MCF 10A (cell line): ENCODE measurements at regions of chr3 and their contacts with region 1.

Region 1: GRCh38 chr3:46488735-46489361 is 8.9 kb upstream of the RTP3 start:
- DNase-seq: peak; percentile 91
- H3K4me3 Mint-ChIP-seq: no peak overlapping the region
- H3K27ac Mint-ChIP-seq: no peak overlapping the region
- H3K4me1 Mint-ChIP-seq: peaks cover 19% of the 10 kb centered on the region
- H3K27me3 Mint-ChIP-seq: no peaks in the 10 kb centered on the region
- CTCF ChIP-seq: peak; percentile 99

Region 2: GRCh38 chr3:45199837-45200648 is 1288.8 kb before region 1 on chr3:
- CTCF ChIA-PET with region 1: no interaction called
- POLR2A ChIA-PET with region 1: no interaction called
- intact Hi-C with region 1: no loop called
- DNase-seq: peak; percentile 94
- H3K4me3 Mint-ChIP-seq: no peak overlapping the region
- H3K27ac Mint-ChIP-seq: peak overlapping the region; percentile 63
- H3K4me1 Mint-ChIP-seq: peaks cover 22% of the 10 kb centered on the region
- H3K27me3 Mint-ChIP-seq: no peaks in the 10 kb centered on the region
- CTCF ChIP-seq: no peak

Region 3: GRCh38 chr3:46013316-46014094 is 475.3 kb before region 1 on chr3:
- CTCF ChIA-PET with region 1: no interaction called
- POLR2A ChIA-PET with region 1: no interaction called
- intact Hi-C with region 1: no loop called
- DNase-seq: no peak
- H3K4me3 Mint-ChIP-seq: no peak overlapping the region
- H3K27ac Mint-ChIP-seq: no peak overlapping the region
- H3K4me1 Mint-ChIP-seq: no peaks in the 10 kb centered on the region
- H3K27me3 Mint-ChIP-seq: no peaks in the 10 kb centered on the region
- CTCF ChIP-seq: no peak

Region 4: DNA sequence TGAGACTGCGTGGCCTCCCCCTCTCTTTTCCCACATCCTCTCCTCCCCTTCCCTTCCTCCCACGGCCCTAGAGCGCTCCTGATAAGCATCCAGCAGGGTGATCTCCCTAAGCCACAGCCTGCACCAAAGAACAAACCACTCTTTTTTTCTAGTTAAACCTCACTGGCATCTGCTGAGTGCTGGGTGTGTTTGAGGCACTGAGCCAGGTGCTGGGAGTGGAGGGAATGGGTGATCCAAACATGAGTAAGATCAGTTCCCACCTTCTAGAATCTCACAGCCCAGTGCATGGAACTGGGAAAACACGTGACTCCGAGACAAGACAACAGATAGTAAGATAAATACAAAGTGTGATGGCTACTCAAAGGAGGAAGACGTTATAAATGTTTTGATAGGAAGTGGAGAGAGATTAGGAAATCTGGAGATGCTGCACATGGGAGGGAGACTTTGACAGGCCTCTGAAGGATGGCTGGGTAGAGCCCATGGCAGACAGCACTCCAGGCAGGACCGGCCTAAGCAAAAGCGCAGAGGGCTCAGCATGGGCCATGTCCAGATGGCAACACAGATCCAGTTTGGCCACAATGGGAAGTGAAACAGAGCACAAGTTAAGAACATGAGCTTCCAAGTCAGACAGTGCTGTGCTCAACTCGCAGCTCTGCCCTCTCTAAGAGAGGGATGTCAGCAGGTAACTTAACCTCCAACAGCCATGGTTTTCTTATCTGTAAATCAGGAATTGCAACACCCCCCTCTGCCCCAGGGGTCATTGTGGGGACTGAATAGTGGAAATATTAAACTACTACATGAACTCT is 191.0 kb before region 1 on chr3:
- CTCF ChIA-PET with region 1: no interaction called
- POLR2A ChIA-PET with region 1: no interaction called
- intact Hi-C with region 1: no loop called
- DNase-seq: peak; percentile 66
- H3K4me3 Mint-ChIP-seq: no peak overlapping the region
- H3K27ac Mint-ChIP-seq: no peak overlapping the region
- H3K4me1 Mint-ChIP-seq: peaks cover 18% of the 10 kb centered on the region
- H3K27me3 Mint-ChIP-seq: no peaks in the 10 kb centered on the region
- CTCF ChIP-seq: no peak

Region 5: DNA sequence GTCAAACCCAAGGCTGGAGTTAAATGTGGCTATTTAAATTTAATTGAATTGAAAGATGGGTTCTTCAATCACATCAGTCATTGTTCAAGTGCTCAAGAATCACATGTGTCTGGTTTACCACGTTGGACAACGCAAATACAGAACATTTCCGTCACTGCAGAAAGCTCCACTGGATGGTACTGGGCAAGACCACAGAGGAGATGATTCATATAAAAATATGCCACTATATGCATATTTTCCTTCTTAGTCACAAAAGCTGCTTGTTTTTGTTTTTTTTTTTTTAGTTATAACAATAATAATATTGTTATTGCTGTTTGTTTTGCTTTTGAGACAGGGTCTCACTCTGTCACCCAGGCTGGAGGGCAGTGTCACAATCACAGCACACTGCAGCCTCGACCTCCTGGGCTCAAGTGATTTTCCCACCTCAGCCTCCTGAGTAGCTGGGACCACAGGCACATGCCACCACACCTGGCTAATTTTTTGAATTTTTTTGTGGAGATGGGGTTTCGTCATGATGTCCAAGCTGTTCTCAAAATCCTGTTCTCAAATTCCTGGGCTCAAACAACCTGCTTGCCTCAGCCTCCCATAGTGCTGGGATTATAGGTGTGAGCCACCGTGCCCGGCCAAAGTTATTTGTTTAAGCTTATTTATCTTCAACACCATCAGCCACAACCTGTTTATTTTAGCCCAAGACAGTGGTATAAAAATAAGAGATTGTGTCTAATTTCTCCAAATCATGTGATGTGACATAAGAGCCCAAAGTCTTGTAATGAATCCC is 28.4 kb after region 1 on chr3:
- CTCF ChIA-PET with region 1: interaction called, 12 read pairs
- POLR2A ChIA-PET with region 1: no interaction called
- intact Hi-C with region 1: no loop called
- DNase-seq: peak; percentile 80
- H3K4me3 Mint-ChIP-seq: peak overlapping the region; percentile 15
- H3K27ac Mint-ChIP-seq: peak overlapping the region; percentile 95
- H3K4me1 Mint-ChIP-seq: peaks cover 22% of the 10 kb centered on the region
- H3K27me3 Mint-ChIP-seq: no peaks in the 10 kb centered on the region
- CTCF ChIP-seq: no peak

Region 6: DNA sequence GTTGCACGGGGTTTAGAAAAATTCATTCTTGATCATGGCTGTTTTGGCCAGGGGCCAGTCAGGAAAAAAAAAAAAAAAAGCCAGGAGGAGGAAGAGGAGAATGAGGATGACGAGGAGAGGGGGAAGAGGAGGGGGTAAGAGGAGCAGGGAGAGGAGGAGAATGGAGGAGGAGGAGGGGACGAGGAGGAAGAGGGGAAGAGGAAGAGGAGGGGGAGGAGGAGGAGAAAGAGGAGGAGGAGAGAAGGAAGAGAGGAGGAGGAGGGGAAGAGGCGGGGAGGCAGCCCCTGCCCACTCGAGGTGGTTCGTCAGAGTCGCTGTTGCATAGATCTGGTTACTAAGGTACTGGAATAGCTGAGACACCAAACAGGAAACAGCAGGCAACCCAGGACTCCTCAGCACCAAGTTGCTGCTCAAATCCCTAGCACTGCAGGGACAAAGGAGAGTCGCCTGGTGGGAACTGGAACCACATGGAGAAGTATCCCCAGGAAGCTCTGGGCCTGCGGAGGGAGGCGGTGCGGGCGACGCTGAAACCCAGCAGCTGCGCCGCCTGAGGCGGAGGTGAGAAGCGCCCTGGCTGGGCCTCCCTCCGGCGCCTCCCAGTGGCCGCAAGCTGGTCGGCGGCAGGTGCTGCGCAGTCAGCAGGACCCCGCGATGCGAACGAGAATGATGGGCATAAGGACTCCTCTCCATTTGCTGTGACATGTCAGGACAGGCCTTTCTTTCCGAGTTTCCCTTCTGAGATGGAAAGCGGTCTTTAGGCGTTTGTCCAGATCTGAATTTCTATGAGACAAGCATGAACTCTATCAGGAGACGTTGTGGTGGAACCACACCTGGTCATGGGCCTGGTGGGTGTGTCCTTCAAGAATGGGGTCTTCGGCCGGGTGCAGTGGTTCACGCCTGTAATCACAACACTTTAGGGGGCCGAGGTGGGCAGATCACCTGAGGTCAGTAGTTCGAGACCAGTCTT is 141.0 kb after region 1 on chr3:
- CTCF ChIA-PET with region 1: interaction called, 46 read pairs
- POLR2A ChIA-PET with region 1: no interaction called
- intact Hi-C with region 1: loop called (anchors 1 kb)
- DNase-seq: peak; percentile 76
- H3K4me3 Mint-ChIP-seq: no peak overlapping the region
- H3K27ac Mint-ChIP-seq: no peak overlapping the region
- H3K4me1 Mint-ChIP-seq: no peaks in the 10 kb centered on the region
- H3K27me3 Mint-ChIP-seq: no peaks in the 10 kb centered on the region
- CTCF ChIP-seq: peak; percentile 96

Region 7: GRCh38 chr3:46674031-46674845 is 185.4 kb after region 1 on chr3:
- CTCF ChIA-PET with region 1: interaction called, 18 read pairs
- POLR2A ChIA-PET with region 1: interaction called, 5 read pairs
- intact Hi-C with region 1: no loop called
- DNase-seq: no peak
- H3K4me3 Mint-ChIP-seq: no peak overlapping the region
- H3K27ac Mint-ChIP-seq: no peak overlapping the region
- H3K4me1 Mint-ChIP-seq: no peaks in the 10 kb centered on the region
- H3K27me3 Mint-ChIP-seq: no peaks in the 10 kb centered on the region
- CTCF ChIP-seq: peak; percentile 11